ENCODE measurements at regions of chr11 and their contacts with region 1.

Region 1: GRCh38 chr11:48013269-48013901 is 33.0 kb downstream of the PTPRJ start:
- DNase-seq: peak; percentile 57
- ATAC-seq: peak; percentile 41
- H3K4me3 Mint-ChIP-seq: peak overlapping the region; percentile 62
- H3K27ac Mint-ChIP-seq: peak overlapping the region; percentile 96
- H3K4me1 Mint-ChIP-seq: peaks cover 79% of the 10 kb centered on the region
- H3K27me3 Mint-ChIP-seq: no peaks in the 10 kb centered on the region

Region 2: DNA sequence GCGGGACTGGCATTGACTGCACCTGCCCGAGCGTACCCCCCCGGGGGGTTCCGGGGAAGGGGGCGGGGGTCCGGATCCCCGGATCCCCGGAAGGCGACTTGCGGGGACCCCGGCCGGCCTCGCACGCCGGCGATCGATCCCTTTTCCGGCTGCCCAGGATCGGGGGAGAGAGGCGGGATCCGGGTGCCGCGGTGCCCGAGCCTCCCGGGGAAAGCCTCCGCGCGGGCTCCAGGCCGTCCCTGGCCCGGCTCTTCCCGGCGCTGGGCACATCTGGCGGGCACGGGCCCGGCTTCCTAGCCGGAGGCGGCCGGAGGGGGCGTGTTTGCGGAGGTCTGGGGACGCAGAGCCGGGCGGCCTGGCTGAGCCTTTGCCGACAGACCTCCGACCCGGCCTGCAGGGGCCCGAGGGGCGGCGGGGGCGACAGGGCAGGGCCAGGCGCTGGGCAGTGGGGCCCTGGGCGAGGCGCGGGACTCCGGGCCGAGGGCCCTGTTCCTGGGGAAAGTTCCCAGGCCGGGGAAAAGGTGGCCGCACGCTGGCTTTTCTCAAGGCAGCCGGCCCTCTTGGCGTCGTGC is 32.2 kb before region 1 on chr11:
- POLR2A ChIA-PET with region 1: no interaction called
- DNase-seq: no peak
- ATAC-seq: peak; percentile 23
- H3K4me3 Mint-ChIP-seq: peak overlapping the region; percentile 98
- H3K27ac Mint-ChIP-seq: no peak overlapping the region
- H3K4me1 Mint-ChIP-seq: peaks cover 32% of the 10 kb centered on the region
- H3K27me3 Mint-ChIP-seq: peaks cover 12% of the 10 kb centered on the region

Region 3: DNA sequence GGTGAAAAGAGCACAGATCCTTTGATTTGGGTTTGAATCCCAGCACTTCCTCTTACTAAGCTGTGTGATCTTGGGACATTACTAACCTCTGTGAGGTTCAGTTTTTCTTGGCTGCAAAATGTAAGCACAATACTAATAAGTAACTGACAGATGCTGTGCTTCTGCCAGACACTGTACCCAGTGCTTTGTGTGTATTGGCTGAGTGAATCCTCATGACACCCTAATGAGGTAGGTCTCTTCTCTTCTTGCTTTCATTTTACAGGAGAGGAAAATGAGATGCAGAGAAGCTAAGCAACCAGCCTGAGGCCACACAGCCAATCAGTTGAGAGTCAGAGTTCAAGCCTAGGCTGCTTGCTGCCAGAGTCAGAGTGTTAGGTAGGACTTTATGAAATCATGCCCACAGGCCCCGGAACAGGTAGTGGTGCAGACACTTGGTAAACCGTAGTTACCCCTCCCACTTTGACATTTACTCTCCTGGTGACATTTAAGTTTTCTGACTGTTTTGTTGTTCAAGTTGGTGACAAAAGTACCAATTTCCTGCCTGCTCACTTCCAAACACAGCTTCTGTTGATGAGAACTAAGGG is 11.9 kb before region 1 on chr11:
- POLR2A ChIA-PET with region 1: interaction called, 43 read pairs
- DNase-seq: peak; percentile 72
- ATAC-seq: peak; percentile 96
- H3K4me3 Mint-ChIP-seq: peak overlapping the region; percentile 80
- H3K27ac Mint-ChIP-seq: peak overlapping the region; percentile 97
- H3K4me1 Mint-ChIP-seq: peaks cover 63% of the 10 kb centered on the region
- H3K27me3 Mint-ChIP-seq: no peaks in the 10 kb centered on the region

Region 4: GRCh38 chr11:48066881-48067800 is 53.8 kb after region 1 on chr11:
- POLR2A ChIA-PET with region 1: no interaction called
- DNase-seq: no peak
- ATAC-seq: no peak
- H3K4me3 Mint-ChIP-seq: no peak overlapping the region
- H3K27ac Mint-ChIP-seq: no peak overlapping the region
- H3K4me1 Mint-ChIP-seq: peaks cover 19% of the 10 kb centered on the region
- H3K27me3 Mint-ChIP-seq: no peaks in the 10 kb centered on the region